Posterior vena cava (tissue), 2 donors: ENCODE measurements at regions of chr12 and their contacts with region 1.

Region 1: DNA sequence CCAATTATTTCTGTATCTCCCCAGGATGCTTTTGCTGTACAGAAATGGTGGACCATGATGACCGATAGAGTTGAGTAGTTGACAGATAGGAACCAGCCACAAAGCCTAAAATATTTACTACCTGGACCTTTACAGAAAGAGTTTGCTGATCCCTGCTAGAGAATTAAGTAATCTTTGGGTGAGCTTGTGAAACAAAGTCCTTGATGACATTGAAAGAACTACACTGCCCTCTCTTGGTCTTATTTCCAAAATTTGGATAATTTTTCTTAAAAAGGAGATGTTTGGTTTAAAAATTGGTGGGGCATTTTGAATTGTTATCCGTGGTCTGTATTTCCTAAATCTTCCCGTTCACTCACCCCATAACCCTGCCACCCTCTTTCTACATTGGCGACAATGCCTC is 13.7 kb upstream of the TCTN1 start:
- DNase-seq: no peak

Region 2: DNA sequence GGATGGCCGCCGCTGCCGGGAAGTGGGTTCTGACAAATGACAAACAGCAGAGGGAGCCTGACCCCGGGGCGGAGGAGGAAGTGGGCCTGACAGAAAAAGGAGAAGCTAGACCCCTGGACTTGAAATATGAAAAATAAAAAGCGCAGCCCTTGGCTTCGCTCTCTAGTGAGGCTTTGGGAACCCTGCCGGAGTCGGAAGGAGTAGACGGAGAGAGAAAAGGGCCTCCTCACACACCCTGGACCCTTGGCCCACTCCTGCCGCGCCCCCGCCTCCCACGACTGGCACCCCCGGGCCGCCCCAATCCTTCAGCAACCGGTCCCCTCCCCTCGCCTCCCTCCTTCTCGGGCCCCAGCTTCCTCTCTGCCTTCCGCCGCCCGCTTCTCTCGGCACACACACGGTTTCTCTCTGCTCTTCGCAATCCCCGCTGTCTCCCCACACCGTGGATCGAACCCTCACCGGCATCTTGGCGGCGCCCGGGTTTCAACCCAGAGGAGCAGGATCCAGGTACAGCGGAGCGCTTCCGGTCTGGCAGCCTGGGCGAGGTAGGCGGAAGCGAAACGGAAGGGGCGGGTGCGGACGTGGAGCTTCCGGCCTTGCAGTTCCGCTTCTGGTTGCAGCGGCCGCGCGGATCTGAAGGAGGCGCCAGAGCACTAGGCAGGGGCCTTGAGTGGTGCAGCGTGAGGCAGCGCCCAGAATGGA is 150.3 kb before region 1 on chr12 and contains the start of gene ARPC3:
- intact Hi-C with region 1: loop called in 1 of 2 experiments (anchors 5 kb)
- DNase-seq: peak; percentile 99
- total RNA-seq, gene ARPC3: 167 to 176 TPM

Region 3: DNA sequence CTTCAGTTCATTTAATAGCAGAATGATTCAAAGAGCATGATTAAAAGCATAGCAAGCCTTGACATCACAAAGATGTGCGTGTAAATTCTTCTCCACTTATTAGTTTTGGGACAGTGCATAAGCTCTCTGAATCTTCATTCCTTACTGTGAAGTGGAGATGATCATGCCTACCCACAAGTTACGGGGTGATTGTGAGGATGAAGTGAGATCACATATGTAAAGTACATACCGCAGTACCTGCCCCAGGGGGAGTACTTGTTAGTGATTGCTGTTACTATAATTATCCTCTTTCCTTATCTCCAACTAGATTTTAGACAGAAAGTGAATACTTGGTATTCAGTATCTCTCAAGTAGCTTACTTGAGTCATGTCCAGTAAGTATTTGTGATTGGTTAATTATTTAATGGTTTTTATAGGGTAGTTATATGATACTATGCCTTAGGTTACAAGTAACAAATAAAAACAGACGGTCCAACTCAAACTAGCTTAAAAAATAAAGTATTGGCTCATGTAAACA is 92.1 kb before region 1 on chr12:
- intact Hi-C with region 1: loop called in 1 of 2 experiments (anchors 2 kb)
- DNase-seq: no peak

Region 4: DNA sequence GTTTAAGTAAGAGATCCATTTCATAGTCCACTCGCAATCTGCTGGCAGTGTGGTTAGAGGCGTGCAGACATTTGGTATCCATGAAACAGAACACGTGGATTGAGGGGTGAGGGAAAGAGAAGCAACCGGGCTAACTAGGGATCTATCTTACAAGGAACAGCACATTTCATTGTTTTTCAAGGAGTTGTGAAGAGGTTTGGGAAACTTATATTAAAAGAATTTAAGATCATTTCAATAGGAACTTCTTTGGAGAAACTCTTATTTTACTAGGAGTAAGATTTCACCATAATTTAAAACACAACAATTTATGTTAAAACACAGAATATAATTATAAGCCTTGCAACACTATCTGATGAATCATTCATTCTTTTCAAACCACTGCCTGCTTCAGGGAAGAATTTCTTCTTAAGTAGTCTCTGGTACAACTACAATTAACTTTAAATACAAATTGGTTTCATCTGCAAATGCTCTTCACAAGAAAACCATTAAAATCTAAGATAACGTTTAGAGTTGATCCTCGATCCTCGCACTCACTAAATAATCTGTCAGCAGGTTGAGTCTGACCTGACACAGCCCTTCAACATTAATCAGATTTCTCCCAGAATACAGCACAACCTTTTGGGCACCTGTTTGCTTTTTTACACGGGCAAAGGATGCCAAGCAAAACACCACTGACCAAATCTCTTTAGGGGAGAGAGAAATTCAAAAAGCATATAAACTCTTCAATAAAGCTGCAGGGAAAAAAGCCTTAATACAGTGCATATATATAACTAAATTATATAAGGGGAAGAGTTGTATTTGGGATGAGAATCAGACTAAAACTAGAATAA is 44.5 kb before region 1 on chr12:
- intact Hi-C with region 1: no loop called
- DNase-seq: no peak